B cell (primary cell): ENCODE measurements at regions of chr16 and their contacts with region 1.

Region 1: GRCh38 chr16:66552286-66553177 is at the start of gene CKLF:
- DNase-seq: peak; percentile 95
- ATAC-seq: peak; percentile 66
- H3K4me3 ChIP-seq: peak within 1 kb of the TSS; percentile 60 to 92 (median 71)
- H3K4me3 Mint-ChIP-seq: peak within 1 kb of the TSS; percentile 95
- H3K27ac ChIP-seq: peak within 1 kb of the TSS; percentile 71 to 75
- H3K27ac Mint-ChIP-seq: peak within 1 kb of the TSS; percentile 98
- H3K4me1 ChIP-seq: peaks cover 52 to 60% of the 10 kb centered on the region in 2 donors
- H3K4me1 Mint-ChIP-seq: peaks cover 79% of the 10 kb centered on the region
- H3K27me3 ChIP-seq: no peaks in the 10 kb centered on the region
- H3K27me3 Mint-ChIP-seq: no peaks in the 10 kb centered on the region
- CTCF ChIP-seq: no peak
- total RNA-seq, gene CKLF: 28.9 and 30.4 TPM in 2 replicates

Region 2: DNA sequence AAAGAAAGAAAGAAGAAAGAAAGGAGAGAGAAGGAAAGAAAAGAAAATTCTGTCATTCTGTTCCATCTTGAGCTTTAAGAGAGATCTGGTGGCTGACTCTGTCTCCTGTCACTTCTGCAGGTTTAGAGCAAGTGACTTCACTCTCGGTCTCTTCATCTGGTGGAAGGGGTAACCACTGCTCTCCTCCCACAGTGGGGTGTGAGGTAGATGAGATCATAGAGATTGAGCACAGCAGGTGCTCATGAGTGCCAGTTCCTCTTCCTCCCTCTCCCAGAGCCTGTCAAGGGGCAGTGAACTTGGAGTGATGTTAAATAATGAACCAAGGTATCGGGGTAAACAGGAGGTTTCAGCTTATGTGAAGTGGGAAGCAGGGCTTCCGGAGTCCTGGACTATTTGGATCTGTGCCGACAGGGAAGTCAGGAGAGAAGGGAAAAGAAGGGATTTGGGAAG is 77.8 kb before region 1 on chr16:
- CTCF ChIA-PET with region 1: interaction called, 15 read pairs
- POLR2A ChIA-PET with region 1: no interaction called
- intact Hi-C with region 1: no loop called
- DNase-seq: peak; percentile 84
- ATAC-seq: peak; percentile 85
- H3K4me3 ChIP-seq: no peak overlapping the region
- H3K4me3 Mint-ChIP-seq: no peak overlapping the region
- H3K27ac ChIP-seq: no peak overlapping the region
- H3K27ac Mint-ChIP-seq: peak overlapping the region; percentile 21
- H3K4me1 ChIP-seq: peaks cover 16 to 21% of the 10 kb centered on the region in 2 donors
- H3K4me1 Mint-ChIP-seq: peaks cover 19% of the 10 kb centered on the region
- H3K27me3 ChIP-seq: peaks cover 0 to 10% (median 6%) of the 10 kb centered on the region in 4 experiments
- H3K27me3 Mint-ChIP-seq: peaks cover 22% of the 10 kb centered on the region
- CTCF ChIP-seq: peak; percentile 20

Region 3: GRCh38 chr16:66511615-66512500 is 40.7 kb before region 1 on chr16:
- CTCF ChIA-PET with region 1: interaction called, 15 read pairs
- POLR2A ChIA-PET with region 1: interaction called, 6 read pairs
- intact Hi-C with region 1: loop called (anchors 1 kb)
- DNase-seq: peak; percentile 34
- ATAC-seq: no peak
- H3K4me3 ChIP-seq: no peak overlapping the region
- H3K4me3 Mint-ChIP-seq: no peak overlapping the region
- H3K27ac ChIP-seq: no peak overlapping the region
- H3K27ac Mint-ChIP-seq: peak overlapping the region; percentile 16
- H3K4me1 ChIP-seq: peaks cover 15 to 29% of the 10 kb centered on the region in 2 donors
- H3K4me1 Mint-ChIP-seq: peaks cover 41% of the 10 kb centered on the region
- H3K27me3 ChIP-seq: peaks cover 0 to 3% (median 0%) of the 10 kb centered on the region in 4 experiments
- H3K27me3 Mint-ChIP-seq: peaks cover 3% of the 10 kb centered on the region
- CTCF ChIP-seq: no peak

Region 4: DNA sequence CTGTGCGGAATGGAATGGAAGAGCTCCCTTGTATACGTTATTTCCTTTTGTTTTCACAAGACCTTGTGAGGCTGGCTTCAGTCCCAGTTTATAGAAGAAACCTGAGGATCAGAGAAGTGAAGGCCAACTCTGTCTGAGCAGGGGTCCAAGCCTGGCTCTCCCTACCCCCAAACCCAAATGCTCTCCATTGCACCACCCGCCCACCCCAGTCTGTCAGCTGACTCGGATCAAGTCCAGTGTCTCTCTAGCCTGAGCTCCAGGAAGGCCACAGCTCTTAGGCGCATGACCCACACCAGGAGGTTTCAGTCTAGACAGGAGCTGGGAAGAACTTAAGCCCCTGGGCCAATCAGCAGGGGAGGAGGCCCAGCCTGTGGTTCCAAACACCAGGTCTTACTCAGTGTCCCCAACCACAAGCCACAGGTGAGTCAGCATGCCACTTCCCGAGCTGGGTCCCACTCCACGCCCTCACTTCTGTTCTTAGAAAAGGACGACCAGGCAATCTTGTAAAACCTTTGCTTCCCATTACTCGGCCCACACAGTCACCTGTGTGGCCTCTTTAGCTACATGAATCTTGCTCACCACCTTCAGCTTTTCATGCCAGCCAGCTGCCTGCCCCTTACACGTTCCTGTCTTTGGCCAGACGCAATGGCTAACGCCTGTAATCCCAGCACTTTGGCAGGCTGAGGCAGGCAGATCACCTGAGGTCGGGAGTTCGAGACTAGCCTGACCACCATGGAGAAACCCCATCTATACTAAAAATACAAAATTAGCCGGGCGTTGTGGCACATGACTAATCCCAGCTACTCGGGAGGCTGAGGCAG is 30.4 kb before region 1 on chr16:
- CTCF ChIA-PET with region 1: interaction called, 46 read pairs
- POLR2A ChIA-PET with region 1: interaction called, 22 read pairs
- intact Hi-C with region 1: loop called (anchors 1 kb)
- DNase-seq: peak; percentile 45
- ATAC-seq: peak; percentile 12
- H3K4me3 ChIP-seq: no peak overlapping the region
- H3K4me3 Mint-ChIP-seq: peak overlapping the region; percentile 81
- H3K27ac ChIP-seq: no peak overlapping the region
- H3K27ac Mint-ChIP-seq: peak overlapping the region; percentile 100
- H3K4me1 ChIP-seq: peaks cover 83 to 90% of the 10 kb centered on the region in 2 donors
- H3K4me1 Mint-ChIP-seq: peaks cover 89% of the 10 kb centered on the region
- H3K27me3 ChIP-seq: no peaks in the 10 kb centered on the region
- H3K27me3 Mint-ChIP-seq: no peaks in the 10 kb centered on the region
- CTCF ChIP-seq: no peak

Region 5: GRCh38 chr16:66539623-66540469 is 12.7 kb before region 1 on chr16:
- CTCF ChIA-PET with region 1: interaction called, 11 read pairs
- POLR2A ChIA-PET with region 1: interaction called, 7 read pairs
- intact Hi-C with region 1: loop called (anchors 1 kb)
- DNase-seq: peak; percentile 62
- ATAC-seq: peak; percentile 80
- H3K4me3 ChIP-seq: peak overlapping the region in 3 of 5 experiments; percentile 2 to 19 (median 2)
- H3K4me3 Mint-ChIP-seq: peak overlapping the region; percentile 62
- H3K27ac ChIP-seq: no peak overlapping the region
- H3K27ac Mint-ChIP-seq: peak overlapping the region; percentile 60
- H3K4me1 ChIP-seq: peaks cover 38 to 43% of the 10 kb centered on the region in 2 donors
- H3K4me1 Mint-ChIP-seq: peaks cover 58% of the 10 kb centered on the region
- H3K27me3 ChIP-seq: no peaks in the 10 kb centered on the region
- H3K27me3 Mint-ChIP-seq: no peaks in the 10 kb centered on the region
- CTCF ChIP-seq: no peak

Region 6: DNA sequence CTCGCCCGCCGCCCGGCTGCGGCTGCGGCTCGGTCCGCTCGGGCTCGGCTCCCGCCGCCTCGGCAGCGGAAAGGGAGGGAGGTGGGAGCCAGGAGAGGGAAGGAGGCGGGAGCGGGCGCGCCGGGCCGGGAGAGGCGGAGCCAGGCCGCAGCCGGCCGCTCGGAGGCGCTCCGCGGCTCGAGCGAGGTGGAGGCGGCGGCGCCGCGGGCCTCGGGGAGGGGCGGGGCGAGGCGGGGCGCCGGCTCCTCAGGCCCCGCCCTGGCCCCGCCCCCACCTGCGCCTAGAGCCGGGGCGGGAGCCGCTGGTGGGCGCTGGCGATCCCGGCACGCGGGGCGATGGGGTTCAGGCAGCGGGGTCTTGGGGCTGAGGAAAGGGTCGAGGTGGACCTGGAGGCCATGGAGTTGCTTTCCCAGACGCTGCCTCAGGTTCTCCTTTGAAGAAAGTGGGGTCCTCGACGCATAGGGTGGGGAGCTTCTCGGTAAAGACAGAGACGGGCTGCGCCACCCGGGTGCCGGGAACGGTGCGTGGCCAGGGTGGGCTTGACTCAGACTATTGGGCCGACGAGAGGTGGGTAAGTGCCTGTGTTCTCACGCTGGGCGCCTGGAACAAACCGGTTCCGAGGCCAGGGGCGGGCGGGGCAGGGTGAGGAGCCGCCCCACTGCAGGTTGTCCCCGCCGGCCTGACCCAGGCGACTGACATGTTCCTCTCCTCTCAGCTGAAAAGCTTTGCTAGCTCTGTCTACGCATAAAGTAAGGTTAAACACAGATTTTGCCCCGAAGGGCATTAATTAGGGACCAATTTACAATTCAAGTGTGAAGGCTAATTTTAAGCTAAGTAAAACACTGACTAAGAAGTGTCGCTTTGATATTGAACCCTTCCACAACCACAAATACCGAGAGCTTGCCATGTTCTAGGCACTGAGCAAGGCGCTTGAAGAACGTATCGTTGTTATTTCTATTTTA is 144.4 kb after region 1 on chr16 and contains the start of gene CMTM4:
- CTCF ChIA-PET with region 1: no interaction called
- POLR2A ChIA-PET with region 1: no interaction called
- intact Hi-C with region 1: loop called (anchors 1 kb)
- DNase-seq: peak; percentile 89
- ATAC-seq: peak; percentile 98
- H3K4me3 ChIP-seq: peak within 1 kb of the TSS; percentile 34 to 83 (median 57)
- H3K4me3 Mint-ChIP-seq: peak within 1 kb of the TSS; percentile 88
- H3K27ac ChIP-seq: no peak within 1 kb of the TSS
- H3K27ac Mint-ChIP-seq: peak within 1 kb of the TSS; percentile 15
- H3K4me1 ChIP-seq: peaks cover 15 to 17% of the 10 kb centered on the region in 2 donors
- H3K4me1 Mint-ChIP-seq: peaks cover 17% of the 10 kb centered on the region
- H3K27me3 ChIP-seq: peaks cover 0 to 53% (median 30%) of the 10 kb centered on the region in 4 experiments
- H3K27me3 Mint-ChIP-seq: peaks cover 30% of the 10 kb centered on the region
- CTCF ChIP-seq: peak; percentile 32
- total RNA-seq, gene CMTM4: 0.59 and 0.68 TPM in 2 replicates